H1 (cell line): ENCODE measurements at regions of chr1 and their contacts with region 1.

Region 1: GRCh38 chr1:113811888-113812660 is at the start of gene RSBN1:
- DNase-seq: peak; percentile 94 to 96
- H3K4me3 ChIP-seq: peak within 1 kb of the TSS; percentile 85 to 99 (median 92)
- H3K27ac ChIP-seq: peak within 1 kb of the TSS; percentile 65
- H3K4me1 ChIP-seq: no peaks in the 10 kb centered on the region
- H3K27me3 ChIP-seq: no peaks in the 10 kb centered on the region
- CTCF ChIP-seq: no peak
- EP300 ChIP-seq: 0 out of 3 replicates have a peak, but pooled peaks of 1 of the 2 experiments have one; percentile 25
- POLR2A ChIP-seq: peak in 1 of 2 experiments; percentile 82; a peak in 2 of 3 replicates
- RAD21 ChIP-seq: no peak; a peak in 1 of 4 replicates
- total RNA-seq, gene RSBN1: 16.4 and 17.6 TPM in 2 replicates

Region 2: DNA sequence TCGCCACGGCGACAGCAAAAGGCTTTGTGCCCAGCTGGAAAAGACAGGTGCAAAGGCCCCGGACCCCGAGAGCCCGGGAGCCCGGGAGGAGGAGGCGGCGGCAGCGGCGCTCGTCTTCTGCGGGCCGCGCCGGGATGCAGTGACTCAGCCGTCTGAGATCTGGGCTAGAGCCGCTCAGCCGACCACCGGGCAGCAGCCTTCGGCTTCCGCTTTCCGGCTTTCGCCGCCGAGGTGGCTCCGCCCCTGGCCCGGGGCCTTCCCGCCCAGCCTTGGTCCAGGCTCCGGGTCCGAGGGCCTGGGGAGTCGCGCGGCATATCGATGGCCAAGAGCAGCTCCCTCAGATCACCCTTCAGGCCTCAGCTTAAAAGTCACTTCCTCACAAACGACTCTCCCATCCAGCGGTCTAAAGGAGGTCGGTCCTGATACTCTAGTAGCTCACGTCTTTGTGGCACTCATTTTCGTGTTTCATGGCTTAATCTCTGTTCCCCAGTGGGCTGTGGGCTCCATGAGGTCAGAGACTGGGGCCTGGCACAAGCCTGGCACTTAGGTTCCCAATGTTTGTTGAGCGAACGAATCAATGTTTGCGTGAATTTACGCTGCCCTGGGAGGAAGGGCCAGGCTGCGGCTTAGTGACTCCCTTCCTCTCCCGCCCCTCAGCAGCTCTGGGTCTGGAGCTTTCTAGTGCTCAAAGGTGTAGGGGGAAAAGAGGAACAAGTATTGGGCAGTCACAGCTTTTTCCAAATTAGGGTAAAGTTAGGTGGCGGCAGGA is 52.6 kb before region 1 on chr1 and contains the start of gene PHTF1:
- CTCF ChIA-PET with region 1: no interaction called
- POLR2A ChIA-PET with region 1: interaction called, 17 read pairs
- DNase-seq: peak; percentile 53 to 85
- H3K4me3 ChIP-seq: peak within 1 kb of the TSS; percentile 59 to 93 (median 86)
- H3K27ac ChIP-seq: peak within 1 kb of the TSS; percentile 90
- H3K4me1 ChIP-seq: peaks cover 0 to 9% (median 0%) of the 10 kb centered on the region in 4 experiments; a peak in 3 of 7 replicates
- H3K27me3 ChIP-seq: no peaks in the 10 kb centered on the region
- CTCF ChIP-seq: no peak
- EP300 ChIP-seq: 0 out of 3 replicates have a peak, but pooled peaks of 1 of the 2 experiments have one; percentile 3
- POLR2A ChIP-seq: peak; percentile 73 to 96
- RAD21 ChIP-seq: no peak
- total RNA-seq, gene PHTF1: 26.9 and 27.7 TPM in 2 replicates

Region 3: GRCh38 chr1:113800487-113800886 is 11.6 kb before region 1 on chr1:
- CTCF ChIA-PET with region 1: no interaction called
- POLR2A ChIA-PET with region 1: no interaction called
- DNase-seq: no peak
- H3K4me3 ChIP-seq: no peak overlapping the region
- H3K27ac ChIP-seq: no peak overlapping the region
- H3K4me1 ChIP-seq: peaks cover 0 to 6% (median 0%) of the 10 kb centered on the region in 4 experiments; a peak in 2 of 7 replicates
- H3K27me3 ChIP-seq: no peaks in the 10 kb centered on the region
- CTCF ChIP-seq: no peak
- EP300 ChIP-seq: no peak
- POLR2A ChIP-seq: no peak
- RAD21 ChIP-seq: no peak

Region 4: GRCh38 chr1:113830039-113830438 is 18.0 kb after region 1 on chr1:
- CTCF ChIA-PET with region 1: no interaction called
- POLR2A ChIA-PET with region 1: no interaction called
- DNase-seq: no peak
- H3K4me3 ChIP-seq: no peak overlapping the region
- H3K27ac ChIP-seq: no peak overlapping the region
- H3K4me1 ChIP-seq: no peaks in the 10 kb centered on the region
- H3K27me3 ChIP-seq: no peaks in the 10 kb centered on the region
- CTCF ChIP-seq: no peak
- EP300 ChIP-seq: no peak
- POLR2A ChIP-seq: no peak
- RAD21 ChIP-seq: no peak

Region 5: DNA sequence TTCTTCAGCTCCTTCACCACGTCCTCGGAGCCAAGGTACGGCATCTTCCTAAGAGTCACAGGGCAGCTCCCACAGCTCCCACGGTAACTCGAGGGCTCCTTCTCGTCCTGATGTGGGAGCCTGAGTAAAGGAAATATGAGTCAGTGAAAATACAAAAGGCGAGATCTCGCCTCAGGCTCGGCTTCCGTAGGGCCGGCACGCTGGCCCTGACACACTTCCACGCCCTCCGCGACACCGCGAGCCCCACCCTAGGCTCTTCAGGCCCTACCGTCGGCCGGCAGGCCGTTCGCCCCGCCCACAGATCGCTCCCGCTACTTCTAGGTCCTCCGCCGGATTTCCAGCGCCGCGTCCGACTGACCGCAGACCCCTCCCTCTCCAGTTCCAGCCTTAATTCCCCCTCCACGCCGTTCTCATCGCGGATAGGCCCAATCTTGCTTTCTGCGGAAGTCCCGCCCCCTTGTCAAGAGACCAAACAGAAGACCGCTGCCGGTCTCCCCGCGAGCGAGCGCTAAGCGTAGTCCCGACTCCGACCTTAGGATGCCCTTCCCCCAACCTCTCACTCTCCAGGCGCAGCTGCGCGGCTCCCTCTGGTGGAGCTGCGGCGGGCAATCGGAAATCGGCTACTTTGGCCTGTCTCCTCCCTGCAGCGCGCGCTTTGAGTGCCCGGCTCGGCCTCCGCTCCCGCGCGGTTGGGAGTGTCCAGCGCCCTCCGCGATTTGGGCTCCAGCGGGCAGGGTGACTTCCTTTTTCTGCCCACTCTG is 92.8 kb after region 1 on chr1 and contains the starts of genes AP4B1 and DCLRE1B:
- CTCF ChIA-PET with region 1: no interaction called
- POLR2A ChIA-PET with region 1: interaction called, 10 read pairs
- DNase-seq: peak; percentile 94 to 99
- H3K4me3 ChIP-seq: peak within 1 kb of the TSS; percentile 73 to 99 (median 92)
- H3K27ac ChIP-seq: peak within 1 kb of the TSS; percentile 40; the same call in 1 of the 2 replicates
- H3K4me1 ChIP-seq: peaks cover 0 to 3% (median under 1%) of the 10 kb centered on the region in 4 experiments; a peak in 5 of 7 replicates
- H3K27me3 ChIP-seq: no peaks in the 10 kb centered on the region
- CTCF ChIP-seq: peak; percentile 32 to 47 (median 39); a peak in 2 of 4 replicates
- EP300 ChIP-seq: peak in 1 of 2 experiments; percentile 83; a peak in 1 of 3 replicates
- POLR2A ChIP-seq: peak in 1 of 2 experiments; percentile 31; a peak in 1 of 3 replicates
- RAD21 ChIP-seq: peak; percentile 45 to 55; a peak in 3 of 4 replicates
- total RNA-seq, gene AP4B1: 8.9 and 11.7 TPM in 2 replicates
- total RNA-seq, gene DCLRE1B: 11.0 TPM in 2 replicates